Activated B cell treated with CpG ODN at 0.5 μM for 24 hours (primary cell): ENCODE measurements at regions of chrX and their contacts with region 1.

Region 1: DNA sequence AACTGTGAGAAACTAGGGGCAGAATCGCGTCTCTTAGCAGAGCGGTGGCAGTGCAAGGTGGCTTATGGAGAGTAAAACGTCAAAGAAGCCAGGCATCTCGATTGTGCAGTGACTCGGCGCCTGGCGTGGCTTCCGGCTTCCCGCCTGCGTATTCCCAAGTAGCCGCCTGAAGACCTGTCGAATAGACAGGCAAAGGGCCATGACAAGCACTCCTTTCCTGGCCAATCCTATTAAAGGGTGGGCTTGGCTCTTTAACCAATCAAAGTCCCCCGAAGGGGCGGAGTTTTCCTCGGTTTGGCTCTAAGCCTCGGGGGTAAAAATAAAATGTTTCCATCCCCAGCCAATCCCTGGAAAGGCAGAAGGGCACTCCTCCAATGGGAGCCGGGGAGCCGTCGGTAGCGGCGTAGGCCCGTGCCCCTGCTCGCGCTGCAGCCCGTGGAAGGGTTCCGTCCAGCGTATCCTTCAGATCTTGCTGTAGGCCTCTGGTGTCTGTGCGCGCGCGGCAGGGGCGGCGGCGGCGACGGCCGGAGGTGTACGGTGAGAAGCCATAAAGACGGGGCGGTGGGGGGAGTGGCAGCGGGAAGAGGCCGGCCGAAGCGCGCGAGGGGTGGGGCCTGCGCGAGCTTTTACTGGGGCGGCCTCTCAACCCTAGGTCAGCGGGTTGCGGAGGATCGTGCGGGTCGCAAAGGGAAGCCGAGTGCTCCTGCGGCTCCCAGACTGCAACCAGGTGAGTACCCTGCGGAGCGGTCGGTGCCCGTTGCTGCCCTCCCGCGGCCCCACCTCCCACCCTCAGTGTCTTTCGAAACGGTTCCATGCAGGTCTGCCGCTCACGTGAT is at the start of gene KANTR:
- DNase-seq: peak; percentile 67
- ATAC-seq: peak; percentile 79
- H3K4me3 Mint-ChIP-seq: peak within 1 kb of the TSS; percentile 88
- H3K27ac Mint-ChIP-seq: peak within 1 kb of the TSS; percentile 85
- H3K4me1 Mint-ChIP-seq: peaks cover 20% of the 10 kb centered on the region
- H3K27me3 Mint-ChIP-seq: no peaks in the 10 kb centered on the region
- CTCF ChIP-seq: no peak
- total RNA-seq, gene KANTR: 11.2 and 12.0 TPM in 2 replicates

Region 2: DNA sequence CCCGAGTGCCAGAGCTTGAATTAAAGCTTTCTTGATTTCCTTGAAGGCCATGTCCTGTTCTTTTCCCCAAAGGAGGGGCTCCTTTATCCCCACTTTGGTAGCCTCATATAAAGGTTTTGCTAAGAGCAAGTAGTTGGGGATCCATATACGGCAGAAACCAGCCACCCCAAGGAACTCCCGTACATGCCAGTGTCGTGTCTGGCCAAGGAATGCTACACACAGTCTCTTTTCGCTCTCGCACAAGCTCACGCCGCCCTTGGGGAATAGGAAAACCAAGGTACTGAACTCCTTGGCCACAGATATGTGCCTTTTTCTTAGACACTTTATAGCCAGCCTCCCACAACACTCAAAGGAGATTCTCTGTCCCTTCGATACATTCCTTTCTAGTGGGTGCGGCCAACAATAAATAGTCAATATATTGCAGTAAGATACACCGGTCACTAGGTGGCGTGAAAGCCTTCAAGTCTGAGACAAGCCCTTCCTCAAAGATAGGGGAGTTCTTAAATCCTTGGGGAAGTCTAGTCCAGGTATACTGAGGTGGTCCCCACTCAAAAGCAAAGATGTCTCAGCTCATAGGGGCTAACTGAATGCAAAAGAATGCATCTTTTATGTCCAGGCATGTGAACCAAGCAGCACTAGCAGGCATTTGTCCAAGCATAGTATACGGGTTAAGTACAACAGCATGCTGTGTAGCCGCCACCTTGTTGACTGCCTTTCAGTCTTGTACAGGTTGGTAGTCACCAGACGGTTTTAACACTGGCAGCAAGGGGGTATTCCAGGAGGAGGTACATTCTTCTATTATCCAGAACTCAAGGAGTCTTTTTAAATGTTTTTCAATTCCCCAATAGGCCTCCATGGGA is 519.3 kb before region 1 on chrX:
- CTCF ChIA-PET with region 1: no interaction called
- POLR2A ChIA-PET with region 1: no interaction called
- intact Hi-C with region 1: loop called (anchors 5 kb)
- DNase-seq: no peak
- ATAC-seq: peak; percentile 42
- H3K4me3 Mint-ChIP-seq: no peak overlapping the region
- H3K27ac Mint-ChIP-seq: no peak overlapping the region
- H3K4me1 Mint-ChIP-seq: no peaks in the 10 kb centered on the region
- H3K27me3 Mint-ChIP-seq: peaks cover 4% of the 10 kb centered on the region
- CTCF ChIP-seq: no peak

Region 3: DNA sequence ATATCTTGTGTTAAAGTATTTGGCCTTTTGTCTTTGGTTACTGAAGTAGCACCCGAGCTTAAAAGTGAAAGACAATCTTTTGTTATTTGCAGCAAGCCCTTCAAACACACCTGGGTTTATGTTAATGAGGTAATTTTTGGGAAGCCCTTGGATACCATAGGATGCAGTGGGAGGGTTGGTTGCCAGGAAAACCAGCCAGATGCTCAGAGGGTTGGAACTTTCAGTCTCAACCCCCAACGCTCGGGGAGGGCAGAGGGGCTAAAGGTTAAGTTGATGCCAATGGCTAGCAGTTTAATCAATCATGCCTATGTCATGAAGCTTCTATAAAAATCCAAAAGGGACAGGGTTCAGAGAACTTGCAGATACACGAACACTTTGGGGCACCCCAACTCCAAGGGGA is 62.6 kb before region 1 on chrX:
- CTCF ChIA-PET with region 1: no interaction called
- POLR2A ChIA-PET with region 1: no interaction called
- intact Hi-C with region 1: no loop called
- DNase-seq: no peak
- ATAC-seq: no peak
- H3K4me3 Mint-ChIP-seq: no peak overlapping the region
- H3K27ac Mint-ChIP-seq: no peak overlapping the region
- H3K4me1 Mint-ChIP-seq: no peaks in the 10 kb centered on the region
- H3K27me3 Mint-ChIP-seq: peaks cover 4% of the 10 kb centered on the region
- CTCF ChIP-seq: no peak

Region 4: DNA sequence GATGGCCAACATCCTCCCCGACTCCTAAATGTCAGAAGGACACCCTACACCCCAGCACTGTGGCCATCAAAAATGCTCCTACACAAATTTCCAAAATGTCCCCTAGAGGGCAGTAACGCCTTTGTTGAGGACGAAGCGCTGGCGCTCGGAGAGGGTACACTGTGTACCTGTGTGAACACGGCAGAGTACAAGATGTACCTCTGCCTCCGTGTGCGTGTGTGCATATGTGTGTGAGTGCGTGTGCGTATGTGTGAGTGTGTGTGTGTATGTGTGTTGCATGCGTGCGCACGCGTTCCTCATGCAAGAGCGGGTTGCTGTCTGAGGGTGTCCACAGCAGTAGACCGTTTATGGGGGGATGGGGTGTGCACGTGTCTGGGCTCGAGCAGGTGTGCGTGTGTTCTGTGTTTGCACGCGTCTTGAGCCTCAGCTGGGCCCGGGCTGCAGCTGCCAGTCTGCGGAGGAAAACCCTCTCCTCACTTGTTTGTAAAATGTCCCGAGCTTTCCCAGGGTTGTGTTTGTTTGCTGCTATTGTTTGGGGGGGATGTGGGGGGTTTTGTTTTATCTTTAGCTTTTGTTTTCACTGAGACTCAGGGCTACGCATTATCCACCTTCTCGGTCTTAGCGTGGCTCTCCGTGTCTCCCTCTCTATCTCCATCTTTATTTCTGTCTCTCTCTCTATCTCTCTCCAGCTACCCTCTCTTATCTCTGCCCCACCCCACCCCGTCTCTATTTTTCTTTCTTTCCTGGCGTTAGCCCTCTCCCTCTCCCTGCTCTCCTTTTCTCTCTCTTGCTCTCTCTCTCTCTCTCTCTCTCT is 22.2 kb before region 1 on chrX:
- CTCF ChIA-PET with region 1: interaction called, 17 read pairs
- POLR2A ChIA-PET with region 1: interaction called, 5 read pairs
- intact Hi-C with region 1: loop called (anchors 1 kb)
- DNase-seq: peak; percentile 32
- ATAC-seq: peak; percentile 84
- H3K4me3 Mint-ChIP-seq: peak overlapping the region; percentile 85
- H3K27ac Mint-ChIP-seq: peak overlapping the region; percentile 90
- H3K4me1 Mint-ChIP-seq: peaks cover 16% of the 10 kb centered on the region
- H3K27me3 Mint-ChIP-seq: no peaks in the 10 kb centered on the region
- CTCF ChIP-seq: no peak

Region 5: GRCh38 chrX:53133400-53133799 is 39.4 kb after region 1 on chrX:
- CTCF ChIA-PET with region 1: no interaction called
- POLR2A ChIA-PET with region 1: no interaction called
- intact Hi-C with region 1: no loop called
- DNase-seq: no peak
- ATAC-seq: no peak
- H3K4me3 Mint-ChIP-seq: no peak overlapping the region
- H3K27ac Mint-ChIP-seq: no peak overlapping the region
- H3K4me1 Mint-ChIP-seq: no peaks in the 10 kb centered on the region
- H3K27me3 Mint-ChIP-seq: no peaks in the 10 kb centered on the region
- CTCF ChIP-seq: no peak

Region 6: GRCh38 chrX:53704294-53704693 is 610.3 kb after region 1 on chrX:
- CTCF ChIA-PET with region 1: no interaction called
- POLR2A ChIA-PET with region 1: no interaction called
- intact Hi-C with region 1: no loop called
- DNase-seq: no peak
- ATAC-seq: peak; percentile 87
- H3K4me3 Mint-ChIP-seq: no peak overlapping the region
- H3K27ac Mint-ChIP-seq: peak overlapping the region; percentile 60
- H3K4me1 Mint-ChIP-seq: peaks cover 10% of the 10 kb centered on the region
- H3K27me3 Mint-ChIP-seq: no peaks in the 10 kb centered on the region
- CTCF ChIP-seq: no peak